A673 (cell line): ENCODE measurements at regions of chr1 and their contacts with region 1.

Region 1: DNA sequence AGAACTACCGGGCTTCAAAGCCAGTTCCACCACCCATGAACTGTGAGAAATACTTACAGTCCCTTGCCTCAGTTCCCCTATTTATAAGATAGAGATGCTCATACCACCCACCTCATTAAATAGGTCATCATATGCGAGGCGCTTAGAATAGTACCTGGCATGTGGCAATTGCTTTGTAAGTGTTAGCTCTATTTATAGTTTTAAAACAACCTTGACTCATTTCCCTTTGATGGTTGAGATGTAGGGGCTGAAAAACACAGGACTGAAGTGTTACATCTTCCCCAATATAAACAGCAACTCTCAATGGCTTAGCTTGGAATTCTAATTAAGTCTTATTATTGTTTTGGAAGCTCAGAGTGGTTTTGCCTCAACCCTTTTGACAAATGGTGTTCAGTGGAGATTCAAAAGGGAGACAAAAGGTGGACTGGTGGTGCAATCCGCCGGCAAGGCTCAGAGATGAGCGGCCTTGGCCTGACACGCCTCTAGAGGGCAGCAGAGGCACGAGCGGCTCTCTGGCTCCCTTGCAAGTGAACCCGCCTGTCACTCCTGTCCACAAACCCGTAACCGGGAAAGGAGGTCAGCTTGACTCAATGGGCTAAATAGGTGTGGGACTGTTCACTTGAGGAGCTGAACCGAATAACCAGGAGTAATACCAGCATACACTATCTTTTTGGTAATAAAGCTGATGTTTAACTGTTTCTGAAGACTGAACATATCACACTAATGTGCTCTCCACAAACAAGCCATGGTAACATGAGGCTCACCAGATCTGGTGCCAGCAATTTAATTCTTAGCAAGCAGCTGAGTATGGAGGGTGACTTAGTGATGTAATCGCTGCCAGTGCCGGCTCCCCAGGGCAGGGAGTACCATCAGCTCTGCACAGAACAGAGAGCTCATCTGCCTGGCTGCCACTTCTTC is 19.5 kb upstream of the SMYD2 start:
- DNase-seq: peak; percentile 87
- H3K4me3 ChIP-seq: peak overlapping the region; percentile 14
- H3K27ac ChIP-seq: no peak overlapping the region
- H3K4me1 ChIP-seq: peaks cover 27% of the 10 kb centered on the region
- H3K27me3 ChIP-seq: no peaks in the 10 kb centered on the region
- CTCF ChIP-seq: peak; percentile 99

Region 2: GRCh38 chr1:214602764-214603657 is 341.5 kb after region 1 on chr1 and contains the start of gene CENPF:
- CTCF ChIA-PET with region 1: no interaction called
- POLR2A ChIA-PET with region 1: no interaction called
- intact Hi-C with region 1: loop called (anchors 5 kb)
- DNase-seq: peak; percentile 100
- H3K4me3 ChIP-seq: peak within 1 kb of the TSS; percentile 76
- H3K27ac ChIP-seq: peak within 1 kb of the TSS; percentile 87
- H3K4me1 ChIP-seq: peaks cover 17% of the 10 kb centered on the region
- H3K27me3 ChIP-seq: no peaks in the 10 kb centered on the region
- CTCF ChIP-seq: peak; percentile 32; the same call in 1 of the 2 replicates
- total RNA-seq, gene CENPF: 273 and 281 TPM in 2 replicates